MCF 10A (cell line): ENCODE measurements at regions of chr5 and their contacts with region 1.

Region 1: DNA sequence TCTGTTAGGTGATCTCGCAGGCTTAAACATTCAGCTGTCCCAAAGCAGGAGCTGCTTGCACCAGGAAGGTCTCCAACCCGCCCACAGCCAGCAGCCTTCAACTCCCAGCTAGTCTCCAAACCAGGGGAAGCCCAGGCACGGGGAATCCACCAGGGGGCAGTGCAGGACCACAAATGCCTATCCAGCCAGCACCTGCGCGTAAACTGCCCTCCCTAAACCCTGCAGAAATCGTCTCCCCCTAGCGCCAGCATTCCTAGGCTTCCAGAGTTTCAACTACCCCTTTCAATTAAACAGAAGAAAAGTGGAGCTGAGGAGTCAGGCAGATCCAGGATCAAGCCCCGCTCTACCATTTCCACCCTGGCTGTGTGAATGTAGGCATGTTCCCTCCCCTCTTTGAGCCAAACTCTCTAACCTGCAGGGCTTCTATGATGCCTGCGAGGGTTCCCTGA is 72.0 kb downstream of the HRH2 start:
- DNase-seq: peak; percentile 94
- H3K4me3 Mint-ChIP-seq: no peak overlapping the region
- H3K27ac Mint-ChIP-seq: no peak overlapping the region
- H3K4me1 Mint-ChIP-seq: peaks cover 9% of the 10 kb centered on the region
- H3K27me3 Mint-ChIP-seq: no peaks in the 10 kb centered on the region
- CTCF ChIP-seq: peak; percentile 100

Region 2: GRCh38 chr5:175015028-175015685 is 714.7 kb before region 1 on chr5:
- CTCF ChIA-PET with region 1: no interaction called
- POLR2A ChIA-PET with region 1: no interaction called
- intact Hi-C with region 1: no loop called
- DNase-seq: no peak
- H3K4me3 Mint-ChIP-seq: no peak overlapping the region
- H3K27ac Mint-ChIP-seq: no peak overlapping the region
- H3K4me1 Mint-ChIP-seq: no peaks in the 10 kb centered on the region
- H3K27me3 Mint-ChIP-seq: peaks cover 21% of the 10 kb centered on the region
- CTCF ChIP-seq: no peak

Region 3: GRCh38 chr5:175059687-175060211 is 670.1 kb before region 1 on chr5:
- CTCF ChIA-PET with region 1: no interaction called
- POLR2A ChIA-PET with region 1: no interaction called
- intact Hi-C with region 1: no loop called
- DNase-seq: no peak
- H3K4me3 Mint-ChIP-seq: no peak overlapping the region
- H3K27ac Mint-ChIP-seq: no peak overlapping the region
- H3K4me1 Mint-ChIP-seq: no peaks in the 10 kb centered on the region
- H3K27me3 Mint-ChIP-seq: peaks cover 34% of the 10 kb centered on the region
- CTCF ChIP-seq: no peak

Region 4: DNA sequence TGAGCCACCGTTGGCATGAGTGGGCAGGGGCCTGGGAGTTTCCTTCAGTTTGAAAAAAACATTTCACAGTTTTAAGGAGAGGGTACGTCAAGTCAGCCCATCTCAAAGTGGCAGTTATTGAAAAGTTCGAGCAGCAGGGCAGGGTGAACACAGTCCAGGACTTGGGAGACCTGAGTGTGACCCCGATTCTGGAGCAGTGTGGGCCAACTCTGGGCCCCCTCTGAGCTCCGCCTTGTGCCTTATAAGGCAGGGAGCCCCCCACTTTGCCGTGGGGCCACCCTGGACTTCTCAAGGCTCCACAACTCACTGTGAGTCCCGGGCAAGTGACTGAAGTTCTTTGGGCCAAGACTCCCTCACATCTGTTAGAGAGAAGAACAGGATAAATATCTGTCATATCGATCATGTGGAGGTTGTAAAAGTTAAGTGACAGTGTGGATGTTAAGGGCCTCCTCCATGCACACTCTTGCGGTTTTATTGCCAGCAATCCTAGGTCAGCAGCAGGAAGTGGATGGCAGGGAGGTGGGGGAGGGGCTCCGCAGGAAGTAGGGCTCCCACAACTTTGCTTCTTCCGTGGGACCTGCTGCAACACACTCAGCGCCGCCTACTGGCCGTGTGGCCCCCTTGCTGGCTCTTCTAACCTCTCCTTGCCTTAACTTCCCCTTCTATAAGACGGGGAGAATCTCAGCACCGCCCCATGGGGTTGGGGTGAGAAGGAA is 33.6 kb before region 1 on chr5:
- CTCF ChIA-PET with region 1: interaction called, 10 read pairs
- POLR2A ChIA-PET with region 1: no interaction called
- intact Hi-C with region 1: no loop called
- DNase-seq: peak; percentile 60
- H3K4me3 Mint-ChIP-seq: no peak overlapping the region
- H3K27ac Mint-ChIP-seq: no peak overlapping the region
- H3K4me1 Mint-ChIP-seq: no peaks in the 10 kb centered on the region
- H3K27me3 Mint-ChIP-seq: peaks cover 33% of the 10 kb centered on the region
- CTCF ChIP-seq: peak; percentile 48

Region 5: GRCh38 chr5:175746851-175747250 is 17.0 kb after region 1 on chr5:
- CTCF ChIA-PET with region 1: interaction called, 80 read pairs
- POLR2A ChIA-PET with region 1: interaction called, 3 read pairs
- intact Hi-C with region 1: no loop called
- DNase-seq: peak; percentile 63
- H3K4me3 Mint-ChIP-seq: peak overlapping the region; percentile 51
- H3K27ac Mint-ChIP-seq: no peak overlapping the region
- H3K4me1 Mint-ChIP-seq: peaks cover 14% of the 10 kb centered on the region
- H3K27me3 Mint-ChIP-seq: peaks cover 26% of the 10 kb centered on the region
- CTCF ChIP-seq: no peak

Region 6: GRCh38 chr5:175796536-175797499 is 67.0 kb after region 1 on chr5:
- CTCF ChIA-PET with region 1: interaction called, 16 read pairs
- POLR2A ChIA-PET with region 1: no interaction called
- intact Hi-C with region 1: no loop called
- DNase-seq: peak; percentile 89
- H3K4me3 Mint-ChIP-seq: no peak overlapping the region
- H3K27ac Mint-ChIP-seq: no peak overlapping the region
- H3K4me1 Mint-ChIP-seq: peaks cover 6% of the 10 kb centered on the region
- H3K27me3 Mint-ChIP-seq: peaks cover 60% of the 10 kb centered on the region
- CTCF ChIP-seq: no peak

Region 7: GRCh38 chr5:175889910-175890684 is 160.2 kb after region 1 on chr5:
- CTCF ChIA-PET with region 1: interaction called, 20 read pairs
- POLR2A ChIA-PET with region 1: no interaction called
- intact Hi-C with region 1: no loop called
- DNase-seq: no peak
- H3K4me3 Mint-ChIP-seq: no peak overlapping the region
- H3K27ac Mint-ChIP-seq: no peak overlapping the region
- H3K4me1 Mint-ChIP-seq: no peaks in the 10 kb centered on the region
- H3K27me3 Mint-ChIP-seq: peaks cover 12% of the 10 kb centered on the region
- CTCF ChIP-seq: no peak

Region 8: GRCh38 chr5:176573564-176574296 is 843.9 kb after region 1 on chr5:
- CTCF ChIA-PET with region 1: interaction called, 11 read pairs
- POLR2A ChIA-PET with region 1: no interaction called
- intact Hi-C with region 1: no loop called
- DNase-seq: peak; percentile 77
- H3K4me3 Mint-ChIP-seq: no peak overlapping the region
- H3K27ac Mint-ChIP-seq: no peak overlapping the region
- H3K4me1 Mint-ChIP-seq: peaks cover 14% of the 10 kb centered on the region
- H3K27me3 Mint-ChIP-seq: peaks cover 18% of the 10 kb centered on the region
- CTCF ChIP-seq: peak; percentile 94